ENCODE measurements at regions of chr5 and their contacts with region 1.

Region 1: DNA sequence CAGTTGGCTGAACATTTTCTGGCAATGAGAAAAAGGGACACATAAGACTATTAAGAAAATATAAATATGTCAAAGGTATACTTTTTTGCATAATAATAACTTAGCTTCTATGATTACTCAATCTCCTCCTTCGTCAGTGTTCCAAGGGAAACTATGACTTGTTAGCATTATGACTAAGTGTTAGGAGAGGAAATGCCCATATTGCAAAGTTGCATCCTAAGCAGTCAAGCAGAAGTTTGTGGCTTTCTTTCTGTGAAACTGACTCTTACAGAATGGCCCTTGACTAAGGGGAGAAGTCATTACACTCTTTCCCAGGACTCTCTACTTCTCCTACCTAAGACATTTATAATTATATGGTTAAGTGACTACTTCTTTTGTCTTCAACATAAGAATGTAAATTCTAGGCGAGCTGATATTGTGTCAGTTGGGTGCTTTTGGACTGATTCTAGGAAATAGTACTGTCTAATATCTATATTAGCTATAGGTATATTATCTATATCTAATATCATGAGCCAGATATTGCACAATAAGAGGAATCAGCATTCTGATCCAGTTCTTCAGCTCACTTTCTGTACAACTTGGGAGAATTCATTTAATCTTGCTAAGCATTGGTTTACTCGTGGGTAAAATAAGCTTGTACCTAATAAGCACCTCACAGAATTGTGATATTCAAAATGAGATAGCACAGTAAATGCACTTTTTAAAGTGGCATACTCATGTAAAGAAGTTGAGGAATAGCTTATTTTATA is 16.4 kb upstream of the SPINK6 start:
- DNase-seq: no peak
- ATAC-seq: peak; percentile 99
- H3K4me3 Mint-ChIP-seq: no peak overlapping the region
- H3K27ac Mint-ChIP-seq: no peak overlapping the region
- H3K4me1 Mint-ChIP-seq: peaks cover 11% of the 10 kb centered on the region
- H3K27me3 Mint-ChIP-seq: peaks cover 15% of the 10 kb centered on the region

Region 2: GRCh38 chr5:148482691-148483462 is 296.5 kb after region 1 on chr5:
- CTCF ChIA-PET with region 1: no interaction called
- POLR2A ChIA-PET with region 1: no interaction called
- intact Hi-C with region 1: no loop called
- DNase-seq: peak; percentile 85
- ATAC-seq: peak; percentile 88
- H3K4me3 Mint-ChIP-seq: no peak overlapping the region
- H3K27ac Mint-ChIP-seq: no peak overlapping the region
- H3K4me1 Mint-ChIP-seq: peaks cover 5% of the 10 kb centered on the region
- H3K27me3 Mint-ChIP-seq: peaks cover 33% of the 10 kb centered on the region

Region 3: GRCh38 chr5:148791334-148791667 is 604.9 kb after region 1 on chr5:
- CTCF ChIA-PET with region 1: no interaction called
- POLR2A ChIA-PET with region 1: no interaction called
- intact Hi-C with region 1: loop called in 1 of 2 experiments (anchors 1 kb)
- DNase-seq: peak; percentile 68
- ATAC-seq: peak; percentile 94
- H3K4me3 Mint-ChIP-seq: no peak overlapping the region
- H3K27ac Mint-ChIP-seq: no peak overlapping the region
- H3K4me1 Mint-ChIP-seq: peaks cover 23% of the 10 kb centered on the region
- H3K27me3 Mint-ChIP-seq: peaks cover 45% of the 10 kb centered on the region

Measured in activated CD4-positive, alpha-beta T cell treated with anti-CD3 and anti-CD28 coated beads for 36 hours (primary cell).